Right cardiac atrium (tissue), 5 donors: ENCODE measurements at regions of chr9 and their contacts with region 1.

Region 1: GRCh38 chr9:98034593-98035546 is 21.7 kb upstream of the NANS start:
- DNase-seq: peak; percentile 85 to 94 (median 90)
- ATAC-seq: peak; percentile 83 to 88
- H3K4me3 ChIP-seq: no peak overlapping the region
- H3K27ac ChIP-seq: no peak overlapping the region
- H3K4me1 ChIP-seq: peaks cover 4% of the 10 kb centered on the region
- H3K27me3 ChIP-seq: no peaks in the 10 kb centered on the region

Region 2: DNA sequence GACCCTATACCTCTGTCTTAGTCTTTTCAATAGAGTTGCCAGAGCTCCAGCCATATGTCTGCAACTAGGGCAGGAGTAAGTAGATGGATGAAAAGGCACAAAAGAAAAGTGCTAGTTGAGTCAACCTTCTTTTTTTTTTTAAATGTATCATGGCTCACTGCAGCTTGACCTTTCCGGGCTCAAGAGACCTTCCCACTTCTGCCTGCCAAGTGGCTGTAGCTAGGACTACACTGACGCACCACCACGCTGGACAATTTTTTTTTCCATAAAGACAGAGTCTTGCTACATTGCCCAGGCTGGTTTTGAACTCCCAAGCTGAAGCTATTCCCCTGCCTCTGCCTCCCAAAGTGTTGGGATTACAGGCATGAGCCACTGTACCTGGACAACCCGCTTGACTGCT is 154.5 kb before region 1 on chr9:
- intact Hi-C with region 1: no loop called
- DNase-seq: peak in 1 of 3 donors; percentile 36
- ATAC-seq: peak in 1 of 2 donors; percentile 40
- H3K4me3 ChIP-seq: no peak overlapping the region
- H3K27ac ChIP-seq: no peak overlapping the region
- H3K4me1 ChIP-seq: peaks cover 2% of the 10 kb centered on the region
- H3K27me3 ChIP-seq: no peaks in the 10 kb centered on the region

Region 3: DNA sequence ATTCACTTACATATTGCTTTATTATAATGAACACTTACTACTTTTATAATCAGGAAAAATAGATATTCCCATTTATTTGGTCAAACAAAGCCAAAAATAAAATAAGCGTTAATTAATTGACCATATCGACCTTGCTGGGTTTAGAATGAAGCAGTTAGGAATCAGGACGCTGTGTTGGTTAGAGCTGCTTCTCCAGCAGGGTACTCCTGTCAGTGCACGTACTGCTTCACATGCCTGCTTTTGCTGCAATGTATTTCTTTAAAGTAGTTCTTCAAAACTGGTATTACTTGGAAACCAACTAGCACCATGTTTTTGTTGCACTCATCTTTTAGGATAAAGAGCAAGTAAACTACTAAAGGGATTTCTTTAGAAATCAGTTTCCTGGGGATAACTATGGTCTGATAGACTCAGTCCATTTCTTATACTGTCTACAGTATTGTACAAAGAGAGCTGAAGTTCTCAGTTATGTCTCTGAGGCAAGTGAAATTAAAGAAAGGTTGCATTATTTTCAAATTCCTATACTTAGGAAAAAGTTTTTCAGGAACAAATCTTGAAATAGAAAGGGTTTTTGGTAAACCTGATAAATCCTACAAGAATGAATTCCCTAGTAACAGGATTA is 105.8 kb before region 1 on chr9:
- intact Hi-C with region 1: loop called in 3 of 4 experiments (anchors 5 to 10 kb)
- DNase-seq: no peak
- ATAC-seq: no peak
- H3K4me3 ChIP-seq: no peak overlapping the region
- H3K27ac ChIP-seq: no peak overlapping the region
- H3K4me1 ChIP-seq: no peaks in the 10 kb centered on the region
- H3K27me3 ChIP-seq: no peaks in the 10 kb centered on the region

Region 4: GRCh38 chr9:97982683-97983588 is 51.9 kb before region 1 on chr9 and contains the start of gene ANP32B:
- intact Hi-C with region 1: loop called in 2 of 4 experiments (anchors 5 to 10 kb)
- DNase-seq: peak; percentile 93 to 97 (median 97)
- ATAC-seq: peak; percentile 94
- H3K4me3 ChIP-seq: peak within 1 kb of the TSS; percentile 93
- H3K27ac ChIP-seq: peak within 1 kb of the TSS; percentile 97
- H3K4me1 ChIP-seq: peaks cover 2% of the 10 kb centered on the region
- H3K27me3 ChIP-seq: no peaks in the 10 kb centered on the region
- total RNA-seq, gene ANP32B: 60.4 to 74.5 (median 68.7) TPM